BJ (cell line): ENCODE measurements at regions of chr11 and their contacts with region 1.

Region 1: GRCh38 chr11:68028802-68029556 is 1.5 kb upstream of the NDUFS8 start:
- DNase-seq: no peak
- H3K4me3 ChIP-seq: no peak overlapping the region
- H3K27me3 ChIP-seq: no peaks in the 10 kb centered on the region
- CTCF ChIP-seq: no peak

Region 2: DNA sequence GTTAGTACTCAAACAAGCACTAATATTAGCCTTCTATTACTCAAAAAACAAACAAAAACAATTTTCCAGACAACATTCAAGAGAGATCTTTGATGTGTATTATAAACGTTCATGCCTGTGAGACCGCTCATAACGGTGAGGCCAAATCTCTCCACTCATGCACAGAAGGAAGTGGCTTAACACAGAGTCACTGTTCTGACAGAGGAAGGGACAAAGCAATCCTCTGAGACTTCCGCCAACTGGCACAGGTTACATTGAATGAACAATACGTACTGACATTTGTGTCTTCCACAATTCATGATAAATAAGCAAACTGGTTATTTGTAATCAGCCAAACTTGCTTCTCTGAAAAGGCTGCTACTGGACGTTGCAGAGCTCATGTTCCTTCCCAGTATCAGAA is 61.7 kb after region 1 on chr11:
- CTCF ChIA-PET with region 1: no interaction called
- POLR2A ChIA-PET with region 1: no interaction called
- DNase-seq: no peak
- H3K4me3 ChIP-seq: no peak overlapping the region
- H3K27me3 ChIP-seq: no peaks in the 10 kb centered on the region
- CTCF ChIP-seq: no peak

Region 3: DNA sequence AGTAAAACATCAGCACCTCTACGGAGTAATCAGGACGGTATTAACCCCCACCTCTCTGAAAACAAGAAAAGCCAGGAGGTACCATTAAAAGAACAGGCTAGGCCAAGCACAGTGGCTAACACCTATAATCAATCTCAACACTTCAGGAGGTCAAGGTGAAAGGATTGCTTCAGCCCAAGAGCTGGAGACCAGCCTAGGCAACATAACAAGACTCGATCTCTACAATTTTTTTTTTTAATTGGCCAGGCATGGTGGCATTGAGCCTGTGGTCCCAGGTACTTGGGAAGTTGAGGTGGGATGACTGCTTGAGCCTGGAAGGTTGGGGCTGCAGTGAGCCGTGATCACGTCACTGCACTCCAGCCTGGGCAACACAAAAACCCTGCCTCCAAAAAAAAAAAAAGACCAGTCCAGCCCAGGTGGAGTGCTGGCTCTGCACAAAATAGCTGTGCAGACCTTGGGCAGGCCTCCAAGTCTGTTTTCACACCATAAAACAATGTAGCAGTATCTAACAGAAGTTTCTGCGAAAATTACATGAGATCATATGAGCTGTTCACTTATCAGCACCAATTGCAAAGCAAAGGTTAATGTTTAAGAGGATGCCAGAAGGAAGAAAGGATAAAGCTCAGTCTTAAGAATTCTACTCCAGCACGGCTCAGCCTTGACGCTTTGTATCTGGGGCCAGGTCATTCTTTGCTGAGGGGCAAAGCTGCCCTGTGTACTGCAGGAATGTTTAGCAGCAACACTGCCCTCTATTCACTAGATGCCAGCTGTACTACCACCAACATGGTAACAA is 77.4 kb after region 1 on chr11:
- CTCF ChIA-PET with region 1: no interaction called
- POLR2A ChIA-PET with region 1: no interaction called
- DNase-seq: no peak
- H3K4me3 ChIP-seq: no peak overlapping the region
- H3K27me3 ChIP-seq: no peaks in the 10 kb centered on the region
- CTCF ChIP-seq: no peak

Region 4: DNA sequence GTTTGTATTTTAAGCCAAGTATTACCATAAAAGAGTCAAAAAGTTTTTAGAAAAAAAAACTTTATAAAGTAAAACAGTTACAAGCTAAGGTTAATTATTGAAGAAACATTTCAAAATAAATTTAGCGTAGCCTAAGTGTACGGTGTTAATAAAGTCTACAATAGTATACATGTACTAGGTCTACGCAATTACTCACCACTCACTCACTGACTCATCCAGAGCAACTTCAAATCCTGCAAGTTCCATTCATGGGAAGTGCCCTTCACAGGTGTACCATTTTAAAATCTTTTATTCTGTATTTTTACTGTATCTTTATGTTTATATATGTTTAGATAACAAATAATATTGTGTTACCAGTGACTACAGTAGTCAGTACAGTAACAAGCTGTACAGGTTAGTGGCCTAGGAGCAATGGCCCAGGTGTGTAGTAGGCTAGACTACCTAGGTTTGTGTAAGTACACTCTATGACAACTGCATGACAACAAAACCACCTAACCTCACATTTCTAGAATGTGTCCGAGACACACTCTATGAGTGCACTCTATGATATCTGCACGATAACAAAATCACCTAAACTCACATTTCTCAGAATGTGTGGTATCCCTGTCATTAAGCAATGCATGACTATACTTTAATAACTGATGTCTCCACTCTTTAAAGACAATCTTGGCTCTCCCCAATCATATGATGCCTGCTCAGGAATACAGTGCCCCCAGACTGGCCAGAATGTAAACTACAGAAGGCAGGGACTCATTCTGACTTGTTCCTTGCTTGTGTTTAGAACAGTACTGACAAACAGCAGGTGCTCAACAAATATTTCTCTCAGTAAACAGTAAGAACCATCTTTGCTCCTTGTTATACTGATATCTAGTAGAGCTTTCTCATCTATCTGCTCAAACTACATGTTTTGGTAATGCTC is 162.9 kb after region 1 on chr11:
- CTCF ChIA-PET with region 1: no interaction called
- POLR2A ChIA-PET with region 1: interaction called, 13 read pairs
- DNase-seq: no peak
- H3K4me3 ChIP-seq: no peak overlapping the region
- H3K27me3 ChIP-seq: no peaks in the 10 kb centered on the region
- CTCF ChIP-seq: no peak